PC-3 (cell line): ENCODE measurements at regions of chr7 and their contacts with region 1.

Region 1: GRCh38 chr7:8365503-8366110 is 67.8 kb upstream of the NXPH1 start:
- DNase-seq: peak; percentile 49
- ATAC-seq: peak; percentile 81
- H3K4me3 ChIP-seq: no peak overlapping the region
- H3K27ac ChIP-seq: no peak overlapping the region
- H3K4me1 ChIP-seq: no peaks in the 10 kb centered on the region
- H3K27me3 ChIP-seq: no peaks in the 10 kb centered on the region; the same call in 1 of the 2 replicates
- CTCF ChIP-seq: peak; percentile 72

Region 2: GRCh38 chr7:8277394-8277982 is 88.1 kb before region 1 on chr7:
- CTCF ChIA-PET with region 1: no interaction called
- POLR2A ChIA-PET with region 1: no interaction called
- intact Hi-C with region 1: loop called (anchors 1 kb)
- DNase-seq: peak; percentile 61
- ATAC-seq: peak; percentile 89
- H3K4me3 ChIP-seq: no peak overlapping the region
- H3K27ac ChIP-seq: no peak overlapping the region
- H3K4me1 ChIP-seq: no peaks in the 10 kb centered on the region
- H3K27me3 ChIP-seq: no peaks in the 10 kb centered on the region
- CTCF ChIP-seq: peak; percentile 65

Region 3: DNA sequence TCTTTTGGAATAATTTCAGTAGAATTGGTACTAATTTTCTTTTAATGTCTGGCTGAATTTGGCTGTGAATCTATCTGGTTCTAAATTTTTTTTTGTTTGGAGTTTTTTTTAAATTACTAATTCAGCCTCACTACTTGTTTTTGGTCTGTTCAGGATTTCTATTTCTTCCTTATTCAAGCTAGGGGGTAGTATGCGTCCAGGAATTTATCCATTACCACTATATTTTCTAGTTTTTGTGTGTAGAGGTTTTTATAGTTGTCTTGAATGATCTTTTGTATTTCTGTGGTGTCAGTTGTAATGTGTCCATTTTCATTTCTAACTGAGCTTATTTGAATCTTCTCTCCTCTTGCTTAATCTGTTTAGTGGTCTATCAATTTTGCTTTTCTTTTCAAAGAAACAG is 54.7 kb before region 1 on chr7:
- CTCF ChIA-PET with region 1: no interaction called
- POLR2A ChIA-PET with region 1: no interaction called
- intact Hi-C with region 1: loop called (anchors 1 kb)
- DNase-seq: no peak
- ATAC-seq: no peak
- H3K4me3 ChIP-seq: no peak overlapping the region
- H3K27ac ChIP-seq: no peak overlapping the region
- H3K4me1 ChIP-seq: no peaks in the 10 kb centered on the region
- H3K27me3 ChIP-seq: no peaks in the 10 kb centered on the region; the same call in 1 of the 2 replicates
- CTCF ChIP-seq: no peak

Region 4: DNA sequence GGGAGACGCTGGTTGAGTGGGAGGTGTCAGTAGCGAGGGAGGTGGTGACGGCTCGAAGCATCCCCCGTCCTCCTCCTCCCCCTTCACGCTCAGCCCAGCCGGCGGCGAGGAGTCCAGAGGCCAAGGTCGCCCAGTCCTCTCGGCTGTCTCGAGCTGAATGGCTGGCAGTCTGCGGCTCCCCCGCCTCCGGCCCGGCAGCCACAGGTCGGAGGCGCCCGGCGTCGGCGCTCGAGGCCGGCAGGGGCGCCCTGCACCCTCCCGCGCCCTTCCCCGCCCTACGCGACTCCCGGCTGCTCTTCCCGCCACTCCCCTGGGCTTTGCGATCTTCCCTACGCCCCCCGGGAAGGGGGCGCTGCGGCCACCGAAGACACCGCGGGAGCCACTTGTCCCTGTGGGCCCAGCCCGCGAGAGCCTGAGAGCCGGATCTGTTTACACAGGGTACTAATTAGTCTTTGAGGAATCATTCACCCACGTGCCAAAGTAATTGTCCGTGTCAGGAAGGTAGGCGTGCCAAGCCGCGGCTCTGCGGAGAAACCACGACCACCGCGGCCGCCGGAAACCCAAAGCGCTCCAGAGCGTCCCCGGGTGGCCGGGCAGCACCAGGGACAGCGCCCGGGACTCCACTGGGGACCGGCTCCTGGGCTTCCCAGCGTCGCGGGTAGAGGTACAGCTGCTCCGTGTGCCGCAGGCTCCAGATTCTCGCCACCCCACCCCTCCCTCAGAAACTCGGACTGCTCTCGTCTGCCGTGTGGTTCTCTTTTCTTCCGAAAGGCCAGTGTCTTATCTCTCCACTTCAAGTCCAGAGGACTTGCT is 68.1 kb after region 1 on chr7 and contains the start of gene NXPH1:
- CTCF ChIA-PET with region 1: no interaction called
- POLR2A ChIA-PET with region 1: no interaction called
- intact Hi-C with region 1: no loop called
- DNase-seq: no peak
- ATAC-seq: no peak
- H3K4me3 ChIP-seq: no peak within 1 kb of the TSS
- H3K27ac ChIP-seq: no peak within 1 kb of the TSS
- H3K4me1 ChIP-seq: no peaks in the 10 kb centered on the region
- H3K27me3 ChIP-seq: peaks cover 14% of the 10 kb centered on the region; the same call in 1 of the 2 replicates
- CTCF ChIP-seq: no peak
- total RNA-seq, gene NXPH1: not detected in 2 replicates